CD8-positive, alpha-beta T cell (primary cell): ENCODE measurements at regions of chr13 and their contacts with region 1.

Region 1: GRCh38 chr13:46321494-46322225 is 65.4 kb downstream of the RUBCNL start:
- DNase-seq: peak; percentile 55 to 88 (median 76)
- ATAC-seq: peak; percentile 89
- H3K4me3 ChIP-seq: peak overlapping the region; percentile 6 to 35
- H3K4me3 Mint-ChIP-seq: peak overlapping the region; percentile 73
- H3K27ac ChIP-seq: peak overlapping the region; percentile 46 to 66
- H3K27ac Mint-ChIP-seq: peak overlapping the region; percentile 93
- H3K4me1 ChIP-seq: peaks cover 14% of the 10 kb centered on the region
- H3K4me1 Mint-ChIP-seq: peaks cover 44% of the 10 kb centered on the region
- H3K27me3 ChIP-seq: no peaks in the 10 kb centered on the region
- H3K27me3 Mint-ChIP-seq: no peaks in the 10 kb centered on the region
- CTCF ChIP-seq: peak; percentile 92

Region 2: GRCh38 chr13:45807520-45808099 is 514.0 kb before region 1 on chr13:
- CTCF ChIA-PET with region 1: interaction called, 4 read pairs
- POLR2A ChIA-PET with region 1: interaction called, 3 read pairs
- intact Hi-C with region 1: loop called (anchors 1 to 5 kb)
- DNase-seq: peak in 4 of 9 experiments; percentile 26 to 54 (median 39)
- ATAC-seq: peak; percentile 54
- H3K4me3 ChIP-seq: no peak overlapping the region
- H3K4me3 Mint-ChIP-seq: no peak overlapping the region
- H3K27ac ChIP-seq: no peak overlapping the region
- H3K27ac Mint-ChIP-seq: no peak overlapping the region
- H3K4me1 ChIP-seq: no peaks in the 10 kb centered on the region
- H3K4me1 Mint-ChIP-seq: peaks cover 6% of the 10 kb centered on the region
- H3K27me3 ChIP-seq: no peaks in the 10 kb centered on the region
- H3K27me3 Mint-ChIP-seq: no peaks in the 10 kb centered on the region
- CTCF ChIP-seq: peak; percentile 16

Region 3: GRCh38 chr13:46031581-46032263 is 289.9 kb before region 1 on chr13:
- CTCF ChIA-PET with region 1: no interaction called
- POLR2A ChIA-PET with region 1: no interaction called
- intact Hi-C with region 1: no loop called
- DNase-seq: no peak
- ATAC-seq: no peak
- H3K4me3 ChIP-seq: no peak overlapping the region
- H3K4me3 Mint-ChIP-seq: no peak overlapping the region
- H3K27ac ChIP-seq: no peak overlapping the region
- H3K27ac Mint-ChIP-seq: no peak overlapping the region
- H3K4me1 ChIP-seq: no peaks in the 10 kb centered on the region
- H3K4me1 Mint-ChIP-seq: peaks cover 31% of the 10 kb centered on the region
- H3K27me3 ChIP-seq: no peaks in the 10 kb centered on the region
- H3K27me3 Mint-ChIP-seq: no peaks in the 10 kb centered on the region
- CTCF ChIP-seq: no peak

Region 4: GRCh38 chr13:46126552-46127357 is 194.9 kb before region 1 on chr13:
- CTCF ChIA-PET with region 1: interaction called, 14 read pairs
- POLR2A ChIA-PET with region 1: no interaction called
- intact Hi-C with region 1: loop called in 1 of 2 experiments (anchors 1 kb)
- DNase-seq: peak; percentile 45 to 82 (median 72)
- ATAC-seq: peak; percentile 95
- H3K4me3 ChIP-seq: no peak overlapping the region
- H3K4me3 Mint-ChIP-seq: no peak overlapping the region
- H3K27ac ChIP-seq: peak overlapping the region in 1 of 2 experiments; percentile 69
- H3K27ac Mint-ChIP-seq: peak overlapping the region; percentile 77
- H3K4me1 ChIP-seq: peaks cover 30% of the 10 kb centered on the region
- H3K4me1 Mint-ChIP-seq: peaks cover 55% of the 10 kb centered on the region
- H3K27me3 ChIP-seq: no peaks in the 10 kb centered on the region
- H3K27me3 Mint-ChIP-seq: no peaks in the 10 kb centered on the region
- CTCF ChIP-seq: peak; percentile 80

Region 5: DNA sequence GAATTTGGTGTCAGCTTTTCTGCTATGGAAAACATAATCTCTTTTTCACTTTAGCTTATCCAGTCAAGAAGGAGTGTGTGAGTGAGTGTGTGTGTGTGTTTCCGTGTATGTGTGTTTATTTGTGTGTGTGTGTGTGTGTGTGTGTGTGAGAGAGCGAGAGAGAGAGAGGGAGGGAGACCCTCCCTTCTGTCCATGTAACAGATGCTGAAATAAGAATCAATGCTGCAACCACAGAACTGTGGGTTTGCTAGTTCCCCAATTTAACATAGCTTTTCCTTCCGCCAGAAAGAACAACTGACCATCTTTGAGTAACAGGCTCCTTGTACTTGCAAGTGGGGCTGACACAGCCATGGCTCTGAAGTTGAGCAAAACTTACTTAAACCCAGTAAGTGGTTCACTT is 144.9 kb before region 1 on chr13:
- CTCF ChIA-PET with region 1: interaction called, 21 read pairs
- POLR2A ChIA-PET with region 1: interaction called, 10 read pairs
- intact Hi-C with region 1: loop called in 1 of 2 experiments (anchors 1 kb)
- DNase-seq: peak in 1 of 9 experiments; percentile 62
- ATAC-seq: no peak
- H3K4me3 ChIP-seq: peak overlapping the region; percentile 40
- H3K4me3 Mint-ChIP-seq: peak overlapping the region; percentile 79
- H3K27ac ChIP-seq: peak overlapping the region; percentile 51 to 94
- H3K27ac Mint-ChIP-seq: peak overlapping the region; percentile 94
- H3K4me1 ChIP-seq: peaks cover 66% of the 10 kb centered on the region
- H3K4me1 Mint-ChIP-seq: peaks cover 66% of the 10 kb centered on the region
- H3K27me3 ChIP-seq: no peaks in the 10 kb centered on the region
- H3K27me3 Mint-ChIP-seq: no peaks in the 10 kb centered on the region
- CTCF ChIP-seq: no peak

Region 6: DNA sequence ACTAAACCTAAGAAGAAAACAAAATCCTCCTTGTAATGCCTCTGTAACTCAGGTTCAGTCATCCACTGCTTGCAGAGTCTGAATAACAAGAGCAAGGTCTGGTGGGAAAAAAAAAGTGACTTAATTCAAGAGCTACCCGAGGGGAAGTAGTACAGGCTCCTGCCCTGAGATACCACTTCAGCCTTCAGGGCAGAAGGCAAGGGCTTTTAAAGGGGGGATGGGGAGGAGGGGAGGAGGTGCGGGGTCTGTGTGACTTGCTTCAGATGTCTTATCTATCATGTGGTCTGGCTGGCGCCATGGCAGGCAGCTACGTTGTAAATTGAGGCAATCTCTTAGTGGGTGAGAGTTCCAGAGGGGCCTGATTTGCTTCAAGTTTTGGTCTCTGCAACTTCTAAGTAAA is 43.2 kb before region 1 on chr13:
- CTCF ChIA-PET with region 1: interaction called, 16 read pairs
- POLR2A ChIA-PET with region 1: no interaction called
- intact Hi-C with region 1: loop called in 1 of 2 experiments (anchors 10 kb)
- DNase-seq: no peak
- ATAC-seq: no peak
- H3K4me3 ChIP-seq: no peak overlapping the region
- H3K4me3 Mint-ChIP-seq: no peak overlapping the region
- H3K27ac ChIP-seq: no peak overlapping the region
- H3K27ac Mint-ChIP-seq: peak overlapping the region; percentile 14
- H3K4me1 ChIP-seq: no peaks in the 10 kb centered on the region
- H3K4me1 Mint-ChIP-seq: peaks cover 5% of the 10 kb centered on the region
- H3K27me3 ChIP-seq: no peaks in the 10 kb centered on the region
- H3K27me3 Mint-ChIP-seq: no peaks in the 10 kb centered on the region
- CTCF ChIP-seq: no peak

Region 7: DNA sequence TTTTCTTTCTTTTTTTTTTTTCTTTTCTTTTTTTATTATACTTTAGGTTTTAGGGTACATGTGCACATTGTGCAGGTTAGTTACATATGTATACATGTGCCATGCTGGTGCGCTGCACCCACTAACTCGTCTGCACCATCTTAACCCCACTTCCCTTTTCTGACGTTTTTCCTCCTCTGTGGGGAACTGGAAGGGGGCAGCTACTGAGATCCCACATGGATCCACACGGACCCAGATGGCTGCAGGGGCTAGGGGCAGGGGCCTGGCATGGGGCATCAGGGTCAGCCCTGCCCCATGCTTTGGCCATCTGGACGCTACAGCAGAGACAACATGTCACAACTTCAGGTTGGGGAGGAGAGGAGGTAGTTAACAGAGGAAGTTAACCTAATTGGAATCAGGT is 11.1 kb after region 1 on chr13:
- CTCF ChIA-PET with region 1: interaction called, 11 read pairs
- POLR2A ChIA-PET with region 1: no interaction called
- intact Hi-C with region 1: no loop called
- DNase-seq: no peak
- ATAC-seq: no peak
- H3K4me3 ChIP-seq: no peak overlapping the region
- H3K4me3 Mint-ChIP-seq: no peak overlapping the region
- H3K27ac ChIP-seq: no peak overlapping the region
- H3K27ac Mint-ChIP-seq: no peak overlapping the region
- H3K4me1 ChIP-seq: peaks cover 8% of the 10 kb centered on the region
- H3K4me1 Mint-ChIP-seq: peaks cover 31% of the 10 kb centered on the region
- H3K27me3 ChIP-seq: no peaks in the 10 kb centered on the region
- H3K27me3 Mint-ChIP-seq: no peaks in the 10 kb centered on the region
- CTCF ChIP-seq: no peak